Body of pancreas (tissue), 4 donors: ENCODE measurements at regions of chr18 and their contacts with region 1.

Region 1: GRCh38 chr18:35334821-35335220 is 9.4 kb downstream of the ZNF24 start:
- DNase-seq: no peak
- ATAC-seq: no peak
- H3K4me3 ChIP-seq: no peak overlapping the region
- H3K27ac ChIP-seq: no peak overlapping the region
- H3K4me1 ChIP-seq: peaks cover 31% of the 10 kb centered on the region
- H3K27me3 ChIP-seq: no peaks in the 10 kb centered on the region
- CTCF ChIP-seq: no peak
- POLR2A ChIP-seq: no peak

Region 2: DNA sequence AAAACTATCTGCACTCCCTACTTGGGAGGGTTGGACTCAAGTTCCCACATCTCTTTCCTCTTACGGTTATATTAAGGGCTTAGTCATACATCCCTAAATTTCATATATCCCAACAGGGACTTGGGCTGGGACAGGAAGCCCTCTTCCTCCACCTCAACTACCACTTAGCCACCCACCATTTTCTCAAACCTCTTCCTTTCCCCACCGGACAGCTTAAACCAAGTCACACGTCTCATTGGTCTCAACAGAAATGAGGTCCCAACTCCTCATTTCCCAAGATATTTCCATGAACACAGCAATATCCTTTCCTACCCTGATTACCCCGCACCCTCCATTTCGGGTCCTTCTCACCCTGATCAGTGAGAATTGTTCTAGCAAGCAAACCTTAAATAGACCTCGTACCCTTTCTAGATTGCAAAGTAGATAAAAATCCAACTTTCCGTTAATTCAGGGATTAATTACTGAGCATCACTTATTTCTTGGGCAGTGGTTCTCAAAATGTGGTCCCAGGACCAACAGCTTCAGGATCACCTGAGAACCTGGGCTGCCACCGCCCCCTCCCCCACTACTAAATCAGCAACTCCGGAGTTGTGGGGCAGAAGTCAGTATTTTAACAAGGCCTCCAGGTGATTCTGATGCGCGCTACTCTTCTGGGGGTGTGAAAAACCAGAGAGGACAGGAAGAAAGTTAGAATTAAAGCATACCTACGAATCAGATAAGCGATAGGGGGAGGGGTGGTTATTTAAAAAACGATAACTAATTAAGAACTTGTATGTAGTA is 45.3 kb before region 1 on chr18:
- intact Hi-C with region 1: loop called (anchors 10 kb)
- DNase-seq: peak; percentile 44 to 60 (median 48)
- ATAC-seq: peak; percentile 54
- H3K4me3 ChIP-seq: peak overlapping the region; percentile 61 to 84
- H3K27ac ChIP-seq: peak overlapping the region; percentile 81 to 87 (median 82)
- H3K4me1 ChIP-seq: peaks cover 25% of the 10 kb centered on the region
- H3K27me3 ChIP-seq: no peaks in the 10 kb centered on the region
- CTCF ChIP-seq: no peak
- POLR2A ChIP-seq: no peak